GM12878 (cell line): ENCODE measurements at regions of chr1 and their contacts with region 1.

Region 1: GRCh38 chr1:113904674-113905434 is at the starts of genes AP4B1 and DCLRE1B:
- DNase-seq: peak; percentile 99
- ATAC-seq: peak; percentile 94
- H3K4me3 ChIP-seq: peak within 1 kb of the TSS; percentile 91
- H3K27ac ChIP-seq: peak within 1 kb of the TSS; percentile 88
- H3K4me1 ChIP-seq: peaks cover 3% of the 10 kb centered on the region
- H3K27me3 ChIP-seq: no peaks in the 10 kb centered on the region
- CTCF ChIP-seq: peak; percentile 63 to 98 (median 67)
- EP300 ChIP-seq: peak in 1 of 2 experiments; percentile 69; a peak in 1 of 4 replicates
- POLR2A ChIP-seq: peak; percentile 77
- RAD21 ChIP-seq: peak; percentile 93
- polyA plus RNA-seq, gene AP4B1: 27.2 to 29.0 TPM
- polyA plus RNA-seq, gene DCLRE1B: 5.4 to 7.4 TPM

Region 2: GRCh38 chr1:113777561-113777960 is 127.3 kb before region 1 on chr1:
- CTCF ChIA-PET with region 1: no interaction called
- POLR2A ChIA-PET with region 1: no interaction called
- RAD21 ChIA-PET with region 1: no interaction called
- SMC1A ChIA-PET with region 1: no interaction called
- in situ Hi-C with region 1: no loop called
- intact Hi-C with region 1: no loop called
- DNase-seq: no peak
- ATAC-seq: no peak
- H3K4me3 ChIP-seq: no peak overlapping the region
- H3K27ac ChIP-seq: no peak overlapping the region
- H3K4me1 ChIP-seq: peaks cover 18% of the 10 kb centered on the region
- H3K27me3 ChIP-seq: no peaks in the 10 kb centered on the region
- CTCF ChIP-seq: no peak
- EP300 ChIP-seq: no peak
- POLR2A ChIP-seq: no peak
- RAD21 ChIP-seq: no peak

Region 3: GRCh38 chr1:113811888-113812660 is 92.8 kb before region 1 on chr1 and contains the start of gene RSBN1:
- CTCF ChIA-PET with region 1: interaction called, 4 read pairs
- POLR2A ChIA-PET with region 1: interaction called, 3 read pairs
- RAD21 ChIA-PET with region 1: interaction called, 3 read pairs
- SMC1A ChIA-PET with region 1: interaction called, 3 read pairs
- in situ Hi-C with region 1: no loop called
- intact Hi-C with region 1: loop called (anchors 1 kb)
- DNase-seq: peak; percentile 96
- ATAC-seq: peak; percentile 92
- H3K4me3 ChIP-seq: peak within 1 kb of the TSS; percentile 92
- H3K27ac ChIP-seq: peak within 1 kb of the TSS; percentile 72
- H3K4me1 ChIP-seq: no peaks in the 10 kb centered on the region
- H3K27me3 ChIP-seq: no peaks in the 10 kb centered on the region
- CTCF ChIP-seq: no peak
- EP300 ChIP-seq: peak in 1 of 2 experiments; percentile 80; a peak in 2 of 4 replicates
- POLR2A ChIP-seq: peak; percentile 96
- RAD21 ChIP-seq: no peak
- polyA plus RNA-seq, gene RSBN1: 2.9 to 10.5 TPM

Region 4: GRCh38 chr1:113871597-113872113 is 33.2 kb before region 1 on chr1 and contains the start of gene PTPN22:
- CTCF ChIA-PET with region 1: interaction called, 79 read pairs
- POLR2A ChIA-PET with region 1: interaction called, 38 read pairs
- RAD21 ChIA-PET with region 1: interaction called, 94 read pairs
- SMC1A ChIA-PET with region 1: interaction called, 205 read pairs
- in situ Hi-C with region 1: no loop called
- intact Hi-C with region 1: loop called (anchors 1 kb)
- DNase-seq: peak; percentile 90
- ATAC-seq: peak; percentile 87
- H3K4me3 ChIP-seq: peak within 1 kb of the TSS; percentile 89
- H3K27ac ChIP-seq: peak within 1 kb of the TSS; percentile 79
- H3K4me1 ChIP-seq: peaks cover 47% of the 10 kb centered on the region
- H3K27me3 ChIP-seq: no peaks in the 10 kb centered on the region
- CTCF ChIP-seq: no peak
- EP300 ChIP-seq: peak in 1 of 2 experiments; percentile 86; a peak in 3 of 4 replicates
- POLR2A ChIP-seq: peak; percentile 90
- RAD21 ChIP-seq: no peak
- polyA plus RNA-seq, gene PTPN22: 30.3 to 32.3 TPM

Region 5: GRCh38 chr1:113881661-113882060 is 23.2 kb before region 1 on chr1:
- CTCF ChIA-PET with region 1: interaction called, 51 read pairs
- POLR2A ChIA-PET with region 1: interaction called, 29 read pairs
- RAD21 ChIA-PET with region 1: interaction called, 94 read pairs
- SMC1A ChIA-PET with region 1: interaction called, 205 read pairs
- in situ Hi-C with region 1: no loop called
- intact Hi-C with region 1: no loop called
- DNase-seq: no peak
- ATAC-seq: no peak
- H3K4me3 ChIP-seq: no peak overlapping the region
- H3K27ac ChIP-seq: peak overlapping the region; percentile 40
- H3K4me1 ChIP-seq: peaks cover 28% of the 10 kb centered on the region
- H3K27me3 ChIP-seq: no peaks in the 10 kb centered on the region
- CTCF ChIP-seq: no peak
- EP300 ChIP-seq: no peak
- POLR2A ChIP-seq: no peak
- RAD21 ChIP-seq: no peak

Region 6: DNA sequence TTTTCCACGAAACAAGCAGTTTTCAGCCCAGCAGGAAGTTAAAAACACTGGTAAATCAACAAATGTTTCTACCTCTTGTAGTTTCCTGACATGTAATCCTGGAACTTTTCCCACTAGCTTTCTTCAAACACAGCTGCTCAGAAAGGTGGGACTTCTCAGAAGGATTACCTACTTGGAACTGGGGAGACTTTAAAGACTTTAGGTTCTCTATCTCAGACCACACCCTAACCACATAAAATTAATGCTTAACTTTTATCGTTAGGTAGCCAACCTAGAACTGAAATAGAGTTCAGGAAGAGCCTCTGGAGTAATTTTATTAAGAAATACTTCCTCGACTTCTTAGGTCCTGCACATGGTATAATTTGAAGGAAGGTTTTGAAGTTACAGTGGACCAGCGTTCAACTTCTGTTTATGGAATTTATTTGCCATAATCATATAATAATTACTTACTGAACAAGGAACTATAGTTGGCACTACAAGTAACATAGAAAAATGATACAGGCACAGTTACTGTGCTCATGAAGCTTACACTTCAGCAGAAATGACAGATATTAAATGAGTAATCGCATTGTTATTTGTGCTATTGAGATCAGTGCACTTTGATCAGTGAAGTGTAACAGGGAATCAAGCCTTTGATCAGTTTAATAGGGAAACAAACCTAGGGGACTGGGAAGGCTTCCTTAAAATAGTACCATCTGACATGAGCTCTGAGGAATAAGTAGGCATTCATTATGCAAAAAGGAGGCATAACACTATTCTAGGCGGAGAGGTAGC is 17.3 kb before region 1 on chr1 and contains the start of gene BCL2L15:
- CTCF ChIA-PET with region 1: interaction called, 51 read pairs
- POLR2A ChIA-PET with region 1: interaction called, 7 read pairs
- RAD21 ChIA-PET with region 1: interaction called, 7 read pairs
- SMC1A ChIA-PET with region 1: interaction called, 205 read pairs
- in situ Hi-C with region 1: no loop called
- intact Hi-C with region 1: no loop called
- DNase-seq: no peak
- ATAC-seq: no peak
- H3K4me3 ChIP-seq: no peak within 1 kb of the TSS
- H3K27ac ChIP-seq: no peak within 1 kb of the TSS
- H3K4me1 ChIP-seq: no peaks in the 10 kb centered on the region
- H3K27me3 ChIP-seq: no peaks in the 10 kb centered on the region
- CTCF ChIP-seq: no peak
- EP300 ChIP-seq: no peak
- POLR2A ChIP-seq: no peak
- RAD21 ChIP-seq: no peak
- polyA plus RNA-seq, gene BCL2L15: 0.42 to 0.56 TPM

Region 7: GRCh38 chr1:113949007-113949406 is 44.2 kb after region 1 on chr1:
- CTCF ChIA-PET with region 1: interaction called, 6 read pairs
- POLR2A ChIA-PET with region 1: interaction called, 3 read pairs
- RAD21 ChIA-PET with region 1: no interaction called
- SMC1A ChIA-PET with region 1: interaction called, 19 read pairs
- in situ Hi-C with region 1: no loop called
- intact Hi-C with region 1: no loop called
- DNase-seq: no peak
- ATAC-seq: no peak
- H3K4me3 ChIP-seq: no peak overlapping the region
- H3K27ac ChIP-seq: no peak overlapping the region
- H3K4me1 ChIP-seq: peaks cover 24% of the 10 kb centered on the region
- H3K27me3 ChIP-seq: no peaks in the 10 kb centered on the region
- CTCF ChIP-seq: 0 out of 6 replicates have a peak, but pooled peaks of 1 of the 3 experiments have one; percentile 10
- EP300 ChIP-seq: no peak
- POLR2A ChIP-seq: no peak
- RAD21 ChIP-seq: no peak

Region 8: GRCh38 chr1:114024049-114024448 is 119.2 kb after region 1 on chr1:
- CTCF ChIA-PET with region 1: no interaction called
- POLR2A ChIA-PET with region 1: no interaction called
- RAD21 ChIA-PET with region 1: no interaction called
- SMC1A ChIA-PET with region 1: no interaction called
- in situ Hi-C with region 1: no loop called
- intact Hi-C with region 1: no loop called
- DNase-seq: no peak
- ATAC-seq: no peak
- H3K4me3 ChIP-seq: no peak overlapping the region
- H3K27ac ChIP-seq: no peak overlapping the region
- H3K4me1 ChIP-seq: no peaks in the 10 kb centered on the region
- H3K27me3 ChIP-seq: no peaks in the 10 kb centered on the region; a peak in 2 of 4 replicates
- CTCF ChIP-seq: no peak
- EP300 ChIP-seq: no peak
- POLR2A ChIP-seq: no peak
- RAD21 ChIP-seq: no peak